Sigmoid colon (tissue), 7 donors: ENCODE measurements at regions of chr13 and their contacts with region 1.

Region 1: GRCh38 chr13:113562085-113562749 is 22.3 kb upstream of the TFDP1 start:
- DNase-seq: no peak
- H3K4me3 ChIP-seq: no peak overlapping the region
- H3K27ac ChIP-seq: no peak overlapping the region
- H3K4me1 ChIP-seq: peaks cover 0 to 7% (median 5%) of the 10 kb centered on the region in 4 donors
- H3K27me3 ChIP-seq: no peaks in the 10 kb centered on the region
- CTCF ChIP-seq: peak; percentile 27 to 62 (median 52)
- EP300 ChIP-seq: no peak
- POLR2A ChIP-seq: no peak

Region 2: GRCh38 chr13:113245849-113246791 is 316.1 kb before region 1 on chr13:
- intact Hi-C with region 1: no loop called
- DNase-seq: no peak
- H3K4me3 ChIP-seq: no peak overlapping the region
- H3K27ac ChIP-seq: no peak overlapping the region
- H3K4me1 ChIP-seq: no peaks in the 10 kb centered on the region
- H3K27me3 ChIP-seq: no peaks in the 10 kb centered on the region
- CTCF ChIP-seq: no peak
- EP300 ChIP-seq: no peak
- POLR2A ChIP-seq: no peak

Region 3: DNA sequence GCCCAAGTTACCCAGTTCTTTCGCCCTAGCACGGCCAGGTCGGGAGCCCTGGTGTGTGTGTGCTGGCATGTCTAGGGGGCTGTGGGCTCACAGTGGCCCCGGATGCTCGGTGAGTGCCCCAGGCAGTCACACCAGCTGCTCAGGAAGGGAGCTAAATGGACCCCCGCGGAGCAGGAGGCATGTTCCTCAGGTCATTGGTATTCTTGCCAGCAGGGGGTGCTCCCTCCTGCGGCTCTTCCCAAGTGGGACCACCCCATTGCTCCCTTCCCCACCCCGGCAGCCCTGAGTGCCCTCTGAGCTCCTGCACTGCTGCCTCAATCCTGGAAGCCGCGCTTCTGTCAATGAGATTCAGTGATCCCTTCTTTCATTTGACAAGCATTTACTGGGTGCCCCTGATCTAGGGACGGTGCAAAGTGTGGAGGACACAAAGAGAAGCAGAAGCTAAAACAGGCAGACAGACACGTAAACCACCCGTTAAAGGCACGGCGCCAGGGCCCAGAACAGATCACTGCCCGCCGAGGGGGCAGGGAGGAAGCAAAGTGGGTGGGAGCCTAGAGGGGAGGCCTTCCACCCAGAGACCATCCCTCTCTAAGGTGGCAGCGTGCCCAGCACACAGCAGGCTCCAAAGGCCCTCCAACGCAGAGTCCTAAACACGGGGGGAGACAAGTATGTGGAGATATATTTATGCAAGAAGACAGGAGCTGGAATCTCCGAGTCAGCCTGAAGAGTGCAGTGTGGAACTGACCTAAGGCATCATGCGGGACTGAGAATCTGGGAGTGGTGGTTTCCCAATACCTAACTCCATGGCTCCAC is 103.8 kb before region 1 on chr13:
- intact Hi-C with region 1: loop called (anchors 5 kb)
- DNase-seq: peak; percentile 77
- H3K4me3 ChIP-seq: peak overlapping the region in 1 of 4 donors; percentile 0
- H3K27ac ChIP-seq: peak overlapping the region in 3 of 4 donors; percentile 63 to 76 (median 68)
- H3K4me1 ChIP-seq: peaks cover 0 to 34% (median 23%) of the 10 kb centered on the region in 4 donors
- H3K27me3 ChIP-seq: no peaks in the 10 kb centered on the region
- CTCF ChIP-seq: peak in 3 of 4 experiments; percentile 28 to 45 (median 32)
- EP300 ChIP-seq: no peak
- POLR2A ChIP-seq: no peak